ENCODE measurements at regions of chr13 and their contacts with region 1.

Region 1: DNA sequence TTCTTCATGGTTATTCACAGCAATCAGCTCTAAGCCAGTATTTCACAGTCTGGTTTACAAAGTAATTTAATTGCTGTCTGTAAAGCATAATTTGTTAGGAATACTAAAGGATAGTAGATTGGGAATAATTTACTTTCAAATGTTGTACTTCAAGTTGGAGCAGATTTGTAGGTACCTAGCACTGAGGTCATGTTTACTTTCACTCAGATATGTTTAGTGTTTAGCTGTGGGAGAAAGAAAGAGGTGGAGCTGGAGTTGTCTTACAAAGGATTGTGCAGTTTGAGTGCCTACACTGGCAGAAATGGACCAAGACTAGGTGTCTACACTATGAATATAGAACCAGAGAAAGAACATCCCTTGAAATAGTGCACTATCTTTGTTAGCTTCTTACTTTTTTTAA is 464.6 kb downstream of the PCDH9 start:
- DNase-seq: no peak
- CTCF ChIP-seq: no peak

Region 2: DNA sequence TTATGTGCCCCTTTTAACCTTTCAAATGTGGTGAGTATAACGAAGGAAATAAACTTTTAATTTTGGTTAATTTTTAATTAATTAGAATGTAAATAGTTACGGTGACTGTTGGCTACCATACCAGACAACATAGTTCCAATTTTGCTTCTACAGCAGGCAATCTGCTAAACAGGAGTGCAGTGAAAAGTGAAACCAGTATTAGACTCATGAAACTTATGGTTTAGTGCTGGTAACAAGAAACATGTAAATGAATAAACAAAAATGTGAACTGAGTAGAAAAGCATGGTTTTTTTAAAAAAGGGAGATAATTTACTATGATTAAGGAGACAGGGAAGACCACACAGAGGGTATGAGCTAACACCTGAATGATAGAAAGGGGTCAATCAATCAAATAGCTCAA is 13.9 kb before region 1 on chr13:
- CTCF ChIA-PET with region 1: interaction called, 12 read pairs
- POLR2A ChIA-PET with region 1: no interaction called
- DNase-seq: no peak
- CTCF ChIP-seq: no peak